Heart left ventricle (tissue), 16 donors: ENCODE measurements at regions of chr10 and their contacts with region 1.

Region 1: GRCh38 chr10:80090121-80090520 is 11.7 kb downstream of the TMEM254 start:
- DNase-seq: no peak
- ATAC-seq: no peak
- H3K4me3 ChIP-seq: no peak overlapping the region
- H3K27ac ChIP-seq: no peak overlapping the region
- H3K4me1 ChIP-seq: no peaks in the 10 kb centered on the region
- H3K27me3 ChIP-seq: no peaks in the 10 kb centered on the region
- CTCF ChIP-seq: no peak
- POLR2A ChIP-seq: no peak

Region 2: GRCh38 chr10:80118674-80119073 is 28.6 kb after region 1 on chr10:
- intact Hi-C with region 1: loop called in 1 of 10 experiments (anchors 2 kb)
- DNase-seq: no peak
- ATAC-seq: no peak
- H3K4me3 ChIP-seq: no peak overlapping the region
- H3K27ac ChIP-seq: no peak overlapping the region
- H3K4me1 ChIP-seq: no peaks in the 10 kb centered on the region
- H3K27me3 ChIP-seq: no peaks in the 10 kb centered on the region
- CTCF ChIP-seq: no peak
- POLR2A ChIP-seq: no peak

Region 3: GRCh38 chr10:80177781-80178540 is 87.8 kb after region 1 on chr10:
- intact Hi-C with region 1: no loop called
- DNase-seq: no peak
- ATAC-seq: peak in 3 of 4 donors; percentile 21 to 31 (median 27)
- H3K4me3 ChIP-seq: no peak overlapping the region
- H3K27ac ChIP-seq: peak overlapping the region in 8 of 12 donors; percentile 4 to 44 (median 28)
- H3K4me1 ChIP-seq: peaks cover 9 to 84% (median 66%) of the 10 kb centered on the region in 12 donors
- H3K27me3 ChIP-seq: no peaks in the 10 kb centered on the region
- CTCF ChIP-seq: no peak
- POLR2A ChIP-seq: no peak